ENCODE measurements at regions of chr12 and their contacts with region 1.

Region 1: GRCh38 chr12:47949441-47950308 is 13.7 kb upstream of the TMEM106C start:
- DNase-seq: peak; percentile 64
- H3K4me3 Mint-ChIP-seq: no peak overlapping the region
- H3K27ac Mint-ChIP-seq: no peak overlapping the region
- H3K4me1 Mint-ChIP-seq: peaks cover 6% of the 10 kb centered on the region
- H3K27me3 Mint-ChIP-seq: peaks cover 72% of the 10 kb centered on the region

Region 2: GRCh38 chr12:47882781-47883546 is 66.7 kb before region 1 on chr12:
- CTCF ChIA-PET with region 1: interaction called, 13 read pairs
- DNase-seq: peak; percentile 67
- H3K4me3 Mint-ChIP-seq: peak overlapping the region; percentile 79
- H3K27ac Mint-ChIP-seq: peak overlapping the region; percentile 96
- H3K4me1 Mint-ChIP-seq: peaks cover 70% of the 10 kb centered on the region
- H3K27me3 Mint-ChIP-seq: no peaks in the 10 kb centered on the region

Region 3: DNA sequence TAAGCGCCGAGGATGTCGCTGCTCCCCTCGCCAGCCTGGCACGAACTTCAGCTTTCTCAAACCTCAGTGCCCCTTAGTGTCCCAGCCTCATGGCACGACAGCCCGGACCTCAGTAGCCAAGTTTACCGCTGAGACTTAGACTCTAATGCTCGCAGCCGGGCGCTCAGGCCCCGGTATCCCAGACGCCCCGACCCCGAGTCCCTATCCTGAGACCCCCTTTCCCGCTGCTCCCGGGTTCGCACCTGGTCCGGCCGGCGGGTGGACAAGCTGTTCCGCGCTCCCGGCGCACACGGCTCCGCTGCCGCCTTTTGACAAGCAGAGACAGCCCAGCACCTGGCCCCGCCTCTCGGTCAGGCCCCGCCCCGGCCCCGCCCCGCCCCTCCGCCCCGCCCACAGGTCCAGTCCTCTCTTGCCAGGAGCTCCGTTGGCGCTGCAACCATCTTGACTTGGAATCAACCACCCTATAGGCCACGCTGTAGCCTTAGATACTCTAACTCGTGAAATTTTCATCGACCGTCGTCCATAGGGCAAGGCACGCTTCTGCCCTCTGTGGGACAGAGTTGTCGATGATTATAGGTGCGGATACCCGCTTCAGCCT is 44.9 kb before region 1 on chr12 and contains the start of gene VDR:
- CTCF ChIA-PET with region 1: interaction called, 26 read pairs
- DNase-seq: peak; percentile 78
- H3K4me3 Mint-ChIP-seq: peak within 1 kb of the TSS; percentile 83
- H3K27ac Mint-ChIP-seq: peak within 1 kb of the TSS; percentile 66
- H3K4me1 Mint-ChIP-seq: peaks cover 47% of the 10 kb centered on the region
- H3K27me3 Mint-ChIP-seq: peaks cover 54% of the 10 kb centered on the region

Region 4: GRCh38 chr12:47912556-47912955 is 37.1 kb before region 1 on chr12:
- CTCF ChIA-PET with region 1: interaction called, 12 read pairs
- DNase-seq: no peak
- H3K4me3 Mint-ChIP-seq: no peak overlapping the region
- H3K27ac Mint-ChIP-seq: no peak overlapping the region
- H3K4me1 Mint-ChIP-seq: no peaks in the 10 kb centered on the region
- H3K27me3 Mint-ChIP-seq: peaks cover 60% of the 10 kb centered on the region

Region 5: DNA sequence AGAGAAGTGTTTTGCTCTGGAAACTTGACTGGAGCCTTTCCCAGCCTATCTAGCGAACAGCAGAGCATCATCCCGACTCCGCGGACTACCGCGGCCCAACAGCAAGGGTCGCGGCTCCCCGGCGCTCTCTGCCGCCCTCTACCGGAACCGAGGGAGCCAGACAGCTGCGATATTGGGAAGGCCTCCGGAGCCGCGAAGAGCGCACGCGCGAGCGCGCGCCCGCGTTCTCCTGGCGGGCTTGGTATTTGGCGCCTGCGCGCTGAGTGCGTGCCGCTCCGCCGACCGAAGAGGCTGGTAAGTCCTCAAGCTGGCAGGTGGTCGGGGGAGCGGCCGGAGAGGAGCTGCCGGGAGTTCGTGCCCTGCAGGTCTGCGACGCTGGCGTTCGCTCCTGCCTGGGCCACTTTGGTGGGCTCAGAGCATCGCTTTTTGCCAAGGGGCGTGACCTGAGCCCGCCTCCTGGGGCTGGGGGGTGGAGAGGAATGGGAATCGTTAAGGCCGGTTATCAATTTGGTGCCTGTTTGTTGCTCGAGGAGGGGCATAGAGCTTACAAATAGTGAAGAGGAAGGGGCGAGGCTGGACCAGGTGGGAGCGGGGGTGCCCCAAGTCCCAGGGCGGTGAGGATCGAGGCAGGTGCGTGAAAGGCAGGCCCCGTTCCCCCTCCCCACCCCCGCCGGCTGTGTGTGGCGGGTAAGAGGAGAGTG is 13.8 kb after region 1 on chr12 and contains the start of gene TMEM106C:
- CTCF ChIA-PET with region 1: interaction called, 22 read pairs
- DNase-seq: peak; percentile 93
- H3K4me3 Mint-ChIP-seq: peak within 1 kb of the TSS; percentile 98
- H3K27ac Mint-ChIP-seq: peak within 1 kb of the TSS; percentile 87
- H3K4me1 Mint-ChIP-seq: peaks cover 40% of the 10 kb centered on the region
- H3K27me3 Mint-ChIP-seq: peaks cover 46% of the 10 kb centered on the region

Region 6: DNA sequence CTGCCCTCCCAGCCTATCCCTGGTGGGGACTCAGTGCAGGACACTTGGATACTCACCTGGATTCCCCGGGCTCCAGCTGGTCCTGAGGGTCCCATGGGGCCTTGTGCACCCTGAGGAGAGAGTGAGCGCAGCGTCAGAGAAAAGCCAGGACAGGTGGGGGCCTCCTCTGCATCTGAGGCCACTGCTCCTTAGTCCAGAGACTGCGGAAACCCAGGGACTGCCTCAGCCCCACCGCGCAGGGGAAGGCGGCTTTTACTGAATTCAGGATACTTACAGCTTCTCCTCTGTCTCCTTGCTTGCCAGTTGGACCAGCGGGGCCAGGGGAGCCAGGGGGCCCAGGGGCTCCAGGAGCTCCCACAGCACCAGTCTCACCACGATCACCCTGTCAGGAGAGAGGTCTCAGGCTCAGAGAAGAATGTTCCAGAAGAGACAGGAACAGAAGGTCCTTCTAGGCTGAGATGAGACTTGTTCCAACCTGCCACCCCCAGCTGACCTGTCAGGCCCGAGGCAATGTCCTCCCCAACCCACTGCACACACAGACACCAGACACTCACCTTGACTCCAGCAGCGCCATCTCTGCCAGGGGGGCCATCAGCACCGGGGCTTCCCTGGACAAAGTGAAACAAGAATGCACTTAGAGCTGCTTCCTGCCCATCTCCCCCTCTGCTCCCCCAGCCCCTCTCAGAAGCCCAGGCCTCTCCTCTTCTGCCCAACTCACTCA is 27.5 kb after region 1 on chr12:
- CTCF ChIA-PET with region 1: no interaction called
- DNase-seq: no peak
- H3K4me3 Mint-ChIP-seq: no peak overlapping the region
- H3K27ac Mint-ChIP-seq: peak overlapping the region; percentile 65
- H3K4me1 Mint-ChIP-seq: no peaks in the 10 kb centered on the region
- H3K27me3 Mint-ChIP-seq: peaks cover 68% of the 10 kb centered on the region